PC-9 (cell line): ENCODE measurements at regions of chr7 and their contacts with region 1.

Region 1: DNA sequence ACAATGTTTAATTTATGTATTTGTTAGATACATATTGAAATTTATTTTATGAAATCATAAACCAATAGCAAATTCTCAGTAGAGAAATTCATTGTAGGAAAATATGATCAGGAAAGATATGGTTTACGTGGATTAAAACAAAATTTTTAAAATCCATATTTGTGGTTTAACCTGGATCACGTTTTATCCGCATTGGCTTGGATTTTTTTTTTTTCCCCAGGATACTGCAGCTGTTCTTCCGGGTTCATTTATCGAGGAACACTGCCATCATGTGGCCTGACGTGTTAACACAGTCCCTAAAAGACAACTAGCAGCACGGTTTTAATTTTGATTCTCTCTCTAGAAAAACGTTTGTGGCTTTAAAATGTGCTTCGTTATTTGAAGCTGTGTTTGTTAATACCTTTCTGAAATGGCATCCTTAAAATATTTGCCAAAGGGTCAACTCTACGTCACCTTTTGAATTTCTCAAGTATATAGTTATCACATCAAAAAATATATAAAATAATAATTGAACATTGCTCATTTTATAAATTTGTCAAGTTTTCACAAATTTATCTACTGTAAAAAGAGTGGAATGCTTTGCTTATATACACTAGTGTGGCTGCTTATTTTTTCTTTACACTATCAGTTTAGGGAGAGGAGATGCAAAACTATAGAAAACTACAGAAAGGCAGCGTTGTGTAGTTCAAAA is 8.7 kb upstream of the ASB4 start:
- DNase-seq: peak; percentile 46 to 54
- H3K4me3 ChIP-seq: peak overlapping the region; percentile 28; the same call in 1 of the 2 replicates
- H3K27ac ChIP-seq: no peak overlapping the region
- H3K4me1 ChIP-seq: no peaks in the 10 kb centered on the region
- H3K27me3 ChIP-seq: no peaks in the 10 kb centered on the region
- CTCF ChIP-seq: peak; percentile 87

Region 2: GRCh38 chr7:94216944-94217461 is 1260.0 kb before region 1 on chr7:
- CTCF ChIA-PET with region 1: interaction called, 10 read pairs
- POLR2A ChIA-PET with region 1: no interaction called
- intact Hi-C with region 1: no loop called
- DNase-seq: no peak
- H3K4me3 ChIP-seq: no peak overlapping the region
- H3K27ac ChIP-seq: no peak overlapping the region
- H3K4me1 ChIP-seq: no peaks in the 10 kb centered on the region
- H3K27me3 ChIP-seq: no peaks in the 10 kb centered on the region
- CTCF ChIP-seq: no peak

Region 3: DNA sequence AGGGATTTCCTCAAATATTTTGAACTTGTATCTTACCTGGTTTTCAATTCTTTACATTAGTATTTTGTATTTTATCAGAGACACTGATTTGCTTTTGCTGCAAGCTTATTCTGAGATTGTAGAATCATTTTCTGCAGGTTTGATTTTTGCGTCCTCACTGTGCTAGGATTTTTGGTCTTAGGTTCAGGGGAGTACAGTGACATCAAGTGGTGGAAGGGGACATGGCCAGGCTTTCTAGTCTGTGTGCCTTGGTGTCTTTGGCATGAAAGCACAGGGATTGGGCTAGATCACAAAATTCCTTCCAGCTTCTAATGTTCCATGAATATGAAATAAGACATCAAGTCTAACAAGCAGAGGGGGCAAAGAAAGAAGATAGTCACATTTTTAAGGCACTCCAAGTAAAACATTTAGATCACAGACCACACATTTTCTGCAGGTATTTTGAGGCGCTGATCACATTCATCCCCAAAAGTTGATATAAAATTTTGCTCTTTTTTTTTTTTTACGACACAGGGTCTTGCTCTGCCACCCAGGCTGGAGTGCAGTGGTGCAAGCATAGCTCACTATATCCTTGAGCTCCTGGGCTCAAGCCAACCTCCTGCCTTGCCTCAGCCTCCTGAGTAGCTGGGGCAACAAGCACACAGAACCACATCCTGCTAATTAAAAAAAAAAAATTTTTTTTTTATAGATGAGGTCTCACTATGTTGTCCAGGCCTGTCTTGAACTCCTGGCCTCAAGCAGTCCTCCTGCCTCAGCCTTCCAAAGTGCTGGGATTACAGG is 277.1 kb before region 1 on chr7:
- CTCF ChIA-PET with region 1: no interaction called
- POLR2A ChIA-PET with region 1: no interaction called
- intact Hi-C with region 1: loop called (anchors 5 kb)
- DNase-seq: peak in 1 of 2 experiments; percentile 33
- H3K4me3 ChIP-seq: no peak overlapping the region
- H3K27ac ChIP-seq: no peak overlapping the region
- H3K4me1 ChIP-seq: no peaks in the 10 kb centered on the region
- H3K27me3 ChIP-seq: no peaks in the 10 kb centered on the region
- CTCF ChIP-seq: peak; percentile 74

Region 4: DNA sequence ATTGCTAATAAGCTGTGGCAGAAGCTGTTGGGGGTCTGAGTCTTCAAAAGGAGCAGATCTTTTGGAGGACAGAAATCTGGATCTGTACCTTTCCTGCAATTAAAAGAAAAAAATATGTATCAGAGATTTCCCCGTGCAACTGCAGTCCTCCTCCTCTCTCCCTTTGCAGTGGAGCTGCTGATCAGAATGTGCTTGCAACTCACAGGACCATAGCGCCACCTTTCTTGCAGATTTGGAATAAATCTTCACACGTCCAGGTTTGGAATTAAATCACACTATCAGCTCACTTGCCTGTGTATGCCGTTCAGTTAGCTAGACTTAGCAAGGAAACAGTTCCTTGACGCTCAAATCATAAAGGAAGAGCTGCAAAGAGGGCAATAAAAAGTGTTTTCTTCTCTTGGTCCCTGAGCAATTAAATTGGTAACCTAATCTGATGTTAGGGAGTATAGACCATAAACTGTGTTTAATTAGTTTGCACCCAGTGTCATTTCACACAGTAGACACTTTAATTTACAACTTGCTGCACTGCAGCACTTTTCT is 230.1 kb before region 1 on chr7:
- CTCF ChIA-PET with region 1: interaction called, 5 read pairs
- POLR2A ChIA-PET with region 1: no interaction called
- intact Hi-C with region 1: loop called (anchors 5 kb)
- DNase-seq: peak; percentile 47 to 48
- H3K4me3 ChIP-seq: no peak overlapping the region
- H3K27ac ChIP-seq: no peak overlapping the region
- H3K4me1 ChIP-seq: no peaks in the 10 kb centered on the region
- H3K27me3 ChIP-seq: no peaks in the 10 kb centered on the region
- CTCF ChIP-seq: peak; percentile 83

Region 5: GRCh38 chr7:95396136-95397032 is 80.7 kb before region 1 on chr7 and contains the start of gene PON3:
- CTCF ChIA-PET with region 1: interaction called, 3 read pairs
- POLR2A ChIA-PET with region 1: no interaction called
- intact Hi-C with region 1: loop called (anchors 5 kb)
- DNase-seq: peak in 1 of 2 experiments; percentile 61
- H3K4me3 ChIP-seq: peak within 1 kb of the TSS; percentile 58
- H3K27ac ChIP-seq: no peak within 1 kb of the TSS
- H3K4me1 ChIP-seq: 0 out of 2 replicates have a peak, but pooled peaks cover 4% of the 10 kb centered on the region
- H3K27me3 ChIP-seq: no peaks in the 10 kb centered on the region
- CTCF ChIP-seq: peak; percentile 67
- total RNA-seq, gene PON3: 0.85 and 1.5 TPM in 2 replicates